Naive thymus-derived CD4-positive, alpha-beta T cell (primary cell): ENCODE measurements at regions of chr6 and their contacts with region 1.

Region 1: DNA sequence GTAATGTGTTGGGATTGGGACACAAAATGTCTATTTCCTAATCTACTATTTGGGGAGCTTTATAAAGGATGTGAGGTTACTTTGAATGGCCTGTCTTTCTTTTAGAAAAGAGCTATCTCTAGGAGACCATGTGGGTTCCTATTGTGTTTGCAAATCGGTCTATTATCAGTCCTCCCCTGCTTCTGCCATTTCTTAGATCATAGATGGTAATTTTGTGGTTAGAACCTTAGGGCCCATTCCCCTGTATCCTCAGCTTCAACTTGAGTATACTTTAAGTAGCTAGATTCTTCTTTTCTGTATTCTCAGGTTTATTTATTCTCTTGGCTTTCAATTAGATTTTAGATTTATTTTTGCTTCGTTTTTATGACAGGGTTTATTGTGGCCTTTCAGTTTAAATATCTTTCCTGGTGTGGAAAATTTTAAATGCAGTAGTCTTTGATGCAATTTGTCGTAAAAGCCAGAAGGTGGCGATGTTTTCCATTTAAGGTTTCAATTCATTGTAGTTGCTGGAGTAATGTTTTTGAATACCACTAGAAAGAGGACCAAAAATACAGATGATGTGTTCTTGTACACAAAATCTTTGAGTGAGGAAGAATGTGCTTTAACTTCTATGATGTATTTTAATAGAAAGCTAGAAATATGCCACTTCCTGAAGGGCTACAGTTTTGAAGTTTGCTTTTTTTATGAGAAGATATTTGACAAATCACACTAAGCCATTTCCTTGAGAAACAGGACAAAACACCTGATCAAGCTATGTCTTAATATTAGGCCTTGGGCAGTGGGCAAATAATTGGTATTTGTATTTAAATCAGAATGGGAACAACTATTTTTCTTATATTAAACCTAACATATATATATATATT is 20.3 kb downstream of the TBPL1 start:
- DNase-seq: peak in 7 of 9 donors; percentile 16 to 53 (median 43)
- ATAC-seq: peak; percentile 79
- H3K4me3 ChIP-seq: no peak overlapping the region
- H3K4me3 Mint-ChIP-seq: no peak overlapping the region
- H3K27ac ChIP-seq: no peak overlapping the region
- H3K27ac Mint-ChIP-seq: peak overlapping the region in 2 of 9 donors; percentile 45 to 79
- H3K4me1 ChIP-seq: peaks cover 0 to 6% of the 10 kb centered on the region in 2 donors
- H3K4me1 Mint-ChIP-seq: peaks cover 16 to 67% (median 59%) of the 10 kb centered on the region in 7 donors
- H3K27me3 ChIP-seq: no peaks in the 10 kb centered on the region
- H3K27me3 Mint-ChIP-seq: no peaks in the 10 kb centered on the region

Region 2: GRCh38 chr6:133961831-133962230 is 11.5 kb before region 1 on chr6:
- CTCF ChIA-PET with region 1: interaction called, 8 read pairs
- POLR2A ChIA-PET with region 1: interaction called, 3 read pairs
- intact Hi-C with region 1: loop called in 1 of 2 experiments (anchors 1 kb)
- DNase-seq: no peak
- ATAC-seq: no peak
- H3K4me3 ChIP-seq: no peak overlapping the region
- H3K4me3 Mint-ChIP-seq: no peak overlapping the region
- H3K27ac ChIP-seq: no peak overlapping the region
- H3K27ac Mint-ChIP-seq: peak overlapping the region in 6 of 9 donors; percentile 2 to 61 (median 12)
- H3K4me1 ChIP-seq: peaks cover 4 to 7% of the 10 kb centered on the region in 2 donors
- H3K4me1 Mint-ChIP-seq: peaks cover 37 to 96% (median 84%) of the 10 kb centered on the region in 7 donors
- H3K27me3 ChIP-seq: no peaks in the 10 kb centered on the region
- H3K27me3 Mint-ChIP-seq: no peaks in the 10 kb centered on the region

Region 3: DNA sequence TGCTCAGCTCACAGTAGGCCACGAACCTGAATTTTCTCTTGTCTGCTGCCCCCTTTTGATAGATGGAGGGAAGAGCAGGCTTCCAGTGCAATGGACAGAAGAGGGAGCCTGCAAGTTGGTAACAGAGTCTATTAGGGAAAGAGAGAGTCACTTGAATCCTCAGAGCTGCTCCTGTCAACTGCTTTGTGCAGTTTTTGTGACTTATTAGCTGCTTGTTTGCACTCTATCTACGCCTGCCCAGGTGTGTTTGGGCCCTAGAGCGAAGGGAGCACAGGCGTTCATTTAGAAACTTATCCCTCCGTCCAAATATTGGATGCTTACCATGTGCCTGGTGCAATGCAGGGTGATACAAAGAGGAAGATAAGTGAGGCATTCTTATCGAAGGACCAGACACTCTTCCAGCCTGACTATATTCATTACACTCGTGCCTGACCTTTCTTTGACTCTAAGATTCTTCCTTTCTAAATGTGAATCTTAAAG is 90.7 kb after region 1 on chr6:
- CTCF ChIA-PET with region 1: interaction called, 38 read pairs
- POLR2A ChIA-PET with region 1: no interaction called
- intact Hi-C with region 1: loop called (anchors 1 kb)
- DNase-seq: peak; percentile 13 to 72 (median 56)
- ATAC-seq: peak; percentile 92
- H3K4me3 ChIP-seq: no peak overlapping the region
- H3K4me3 Mint-ChIP-seq: no peak overlapping the region
- H3K27ac ChIP-seq: no peak overlapping the region
- H3K27ac Mint-ChIP-seq: peak overlapping the region in 1 of 9 donors; percentile 36
- H3K4me1 ChIP-seq: no peaks in the 10 kb centered on the region
- H3K4me1 Mint-ChIP-seq: peaks cover 0 to 7% (median 0%) of the 10 kb centered on the region in 7 donors
- H3K27me3 ChIP-seq: no peaks in the 10 kb centered on the region
- H3K27me3 Mint-ChIP-seq: peaks cover 0 to 8% (median 0%) of the 10 kb centered on the region in 5 donors

Region 4: GRCh38 chr6:134502614-134503549 is 529.5 kb after region 1 on chr6:
- CTCF ChIA-PET with region 1: no interaction called
- POLR2A ChIA-PET with region 1: no interaction called
- intact Hi-C with region 1: no loop called
- DNase-seq: no peak
- ATAC-seq: no peak
- H3K4me3 ChIP-seq: no peak overlapping the region
- H3K4me3 Mint-ChIP-seq: no peak overlapping the region
- H3K27ac ChIP-seq: no peak overlapping the region
- H3K27ac Mint-ChIP-seq: peak overlapping the region in 2 of 9 donors; percentile 13 to 60
- H3K4me1 ChIP-seq: no peaks in the 10 kb centered on the region
- H3K4me1 Mint-ChIP-seq: peaks cover 0 to 7% (median 5%) of the 10 kb centered on the region in 7 donors
- H3K27me3 ChIP-seq: no peaks in the 10 kb centered on the region
- H3K27me3 Mint-ChIP-seq: peaks cover 0 to 6% (median 0%) of the 10 kb centered on the region in 5 donors